WTC11 (cell line): ENCODE measurements at regions of chr14 and their contacts with region 1.

Region 1: DNA sequence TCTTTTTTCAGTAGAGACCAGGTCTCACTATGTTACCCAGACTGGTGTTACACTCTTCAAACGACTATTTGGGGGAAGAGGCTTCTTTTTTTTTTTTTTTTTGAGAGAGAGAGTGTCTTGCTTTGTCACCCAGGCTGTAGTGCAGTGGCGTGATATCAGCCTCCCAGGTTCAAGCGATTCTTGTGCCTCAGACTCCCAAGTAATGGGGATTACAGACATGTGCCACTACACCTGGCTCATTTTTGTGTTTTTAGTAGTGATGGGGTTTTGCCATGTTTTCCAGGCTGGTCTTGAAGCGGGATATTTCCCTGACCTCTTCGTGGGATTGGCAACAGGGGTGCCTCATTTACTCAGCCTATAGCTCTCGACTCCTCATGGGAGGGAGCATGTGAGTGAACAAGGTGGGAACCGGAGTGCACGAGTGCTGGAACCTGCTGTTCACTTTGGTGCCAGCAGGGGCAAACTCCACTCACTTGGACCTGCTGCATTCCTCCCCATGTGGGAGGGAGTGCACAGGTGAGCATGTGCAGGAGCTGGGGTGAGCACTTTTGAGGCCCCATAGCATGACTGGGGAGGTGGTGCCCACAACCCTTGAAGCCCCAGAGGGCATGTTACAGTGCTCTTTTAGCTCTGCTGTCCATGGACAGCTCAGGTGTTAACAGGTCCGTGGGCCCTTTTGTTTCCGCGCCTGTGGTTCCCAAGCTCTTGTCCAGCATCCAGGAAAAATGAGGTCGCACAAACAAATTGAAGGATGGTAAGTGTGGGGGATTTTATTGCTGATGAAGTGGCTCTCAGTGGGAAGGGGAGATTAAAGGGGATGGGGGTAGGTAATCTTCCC is 79.1 kb upstream of the HECTD1 start:
- DNase-seq: peak; percentile 68
- ATAC-seq: peak; percentile 99
- H3K4me3 Mint-ChIP-seq: no peak overlapping the region
- H3K27ac Mint-ChIP-seq: no peak overlapping the region
- H3K4me1 Mint-ChIP-seq: peaks cover 12% of the 10 kb centered on the region
- H3K27me3 Mint-ChIP-seq: peaks cover 15% of the 10 kb centered on the region
- CTCF ChIP-seq: peak; percentile 51; the same call in 1 of the 2 replicates

Region 2: GRCh38 chr14:31297701-31298344 is 11.1 kb after region 1 on chr14:
- CTCF ChIA-PET with region 1: interaction called, 12 read pairs
- POLR2A ChIA-PET with region 1: no interaction called
- DNase-seq: no peak
- ATAC-seq: no peak
- H3K4me3 Mint-ChIP-seq: no peak overlapping the region
- H3K27ac Mint-ChIP-seq: no peak overlapping the region
- H3K4me1 Mint-ChIP-seq: peaks cover 35% of the 10 kb centered on the region
- H3K27me3 Mint-ChIP-seq: no peaks in the 10 kb centered on the region
- CTCF ChIP-seq: no peak

Region 3: DNA sequence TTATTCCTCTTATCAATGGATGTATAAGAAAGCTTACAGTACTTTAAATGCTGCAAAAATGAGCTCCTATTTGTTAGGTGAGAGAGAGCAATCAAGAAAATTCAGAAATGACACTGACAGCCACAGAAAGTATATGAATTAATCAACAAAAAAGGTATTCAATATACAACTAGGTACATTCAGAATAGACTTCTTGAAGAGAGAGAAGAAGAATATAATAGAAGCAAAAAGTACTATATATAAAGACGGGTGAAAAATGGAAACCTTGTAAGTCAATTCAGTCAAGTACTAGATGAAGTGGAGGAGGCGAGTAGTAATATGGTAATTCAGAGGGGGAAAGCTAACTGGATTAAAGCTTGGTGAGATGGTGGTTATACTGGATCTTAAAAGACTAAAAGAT is 59.4 kb after region 1 on chr14:
- CTCF ChIA-PET with region 1: no interaction called
- POLR2A ChIA-PET with region 1: no interaction called
- DNase-seq: no peak
- ATAC-seq: no peak
- H3K4me3 Mint-ChIP-seq: no peak overlapping the region
- H3K27ac Mint-ChIP-seq: no peak overlapping the region
- H3K4me1 Mint-ChIP-seq: no peaks in the 10 kb centered on the region
- H3K27me3 Mint-ChIP-seq: no peaks in the 10 kb centered on the region
- CTCF ChIP-seq: no peak